ENCODE measurements at regions of chr10 and their contacts with region 1.

Region 1: DNA sequence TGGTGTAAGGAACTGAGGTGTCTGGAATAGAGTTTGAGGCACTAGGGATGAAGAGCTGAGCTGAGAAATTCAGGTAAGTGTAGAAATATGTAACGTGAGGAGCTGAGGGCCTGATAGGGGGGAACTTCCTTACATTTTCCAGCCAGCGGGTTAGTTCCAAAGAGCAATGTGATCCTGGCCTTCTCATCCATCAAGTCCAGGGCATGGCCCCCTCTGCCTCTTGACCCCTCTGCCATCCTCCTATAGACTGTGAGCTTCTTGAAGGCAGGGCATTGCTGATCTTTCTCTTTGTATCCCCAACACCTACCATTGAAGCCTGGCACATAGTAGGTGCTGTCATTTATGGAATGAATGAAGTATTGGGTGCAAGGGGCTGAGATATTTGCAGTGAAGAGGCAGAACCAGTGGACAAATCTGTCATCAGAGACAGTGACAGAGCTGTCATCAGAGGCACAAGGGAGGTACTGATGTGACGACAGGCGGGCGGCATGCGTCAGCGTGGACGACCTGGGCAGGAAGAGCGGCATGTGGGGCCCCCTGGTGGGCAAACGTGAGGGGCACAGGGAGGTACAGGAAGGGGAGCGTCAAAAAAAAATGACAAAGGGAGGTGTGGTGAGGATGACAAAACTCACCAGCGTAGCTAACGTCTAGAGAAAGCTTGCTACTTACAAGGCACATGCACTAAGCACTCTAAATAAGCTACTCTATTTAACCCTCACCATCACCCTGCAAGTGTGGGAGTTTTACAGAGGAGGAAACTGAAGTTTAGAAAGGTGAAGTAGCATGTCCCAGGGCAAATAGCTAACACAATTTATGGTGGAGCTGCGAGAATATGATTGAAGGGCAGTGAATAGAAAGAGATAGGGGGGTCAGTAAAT is 5.2 kb upstream of the CAMK2G start:
- DNase-seq: peak; percentile 97
- H3K4me3 Mint-ChIP-seq: peak overlapping the region; percentile 6
- H3K27ac Mint-ChIP-seq: no peak overlapping the region
- H3K4me1 Mint-ChIP-seq: peaks cover 27% of the 10 kb centered on the region
- H3K27me3 Mint-ChIP-seq: no peaks in the 10 kb centered on the region

Region 2: DNA sequence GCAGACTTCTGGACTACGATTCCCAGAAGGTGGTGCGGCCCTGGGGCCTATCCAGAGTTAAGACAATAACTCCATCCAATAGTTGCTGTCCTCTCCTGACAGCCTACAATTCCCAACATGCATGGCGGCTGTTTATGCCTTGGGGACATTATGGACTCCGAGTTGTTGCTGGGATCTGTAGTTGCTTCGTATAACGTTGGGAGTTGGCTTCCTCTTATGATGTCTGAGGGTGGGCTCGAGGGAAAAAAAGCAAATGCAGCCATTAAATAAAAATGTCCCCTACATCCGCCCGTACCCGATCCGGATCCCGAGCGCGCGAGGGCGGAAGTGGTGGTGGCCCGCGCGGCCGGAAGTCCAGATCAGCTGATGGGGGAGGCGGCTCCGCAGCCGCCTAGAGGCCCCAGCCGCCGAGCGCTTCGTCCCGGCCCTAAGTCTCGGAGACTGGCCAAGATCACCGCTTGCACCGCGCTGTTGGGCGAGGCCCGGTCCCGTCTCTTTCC is 94.3 kb before region 1 on chr10 and contains the start of gene ZSWIM8:
- CTCF ChIA-PET with region 1: interaction called, 4 read pairs
- POLR2A ChIA-PET with region 1: no interaction called
- intact Hi-C with region 1: loop called (anchors 5 kb)
- DNase-seq: peak; percentile 90
- H3K4me3 Mint-ChIP-seq: peak within 1 kb of the TSS; percentile 98
- H3K27ac Mint-ChIP-seq: peak within 1 kb of the TSS; percentile 96
- H3K4me1 Mint-ChIP-seq: peaks cover 40% of the 10 kb centered on the region
- H3K27me3 Mint-ChIP-seq: no peaks in the 10 kb centered on the region
- total RNA-seq, gene ZSWIM8: 45.1 to 46.2 TPM

Region 3: GRCh38 chr10:73841526-73842285 is 37.8 kb before region 1 on chr10:
- CTCF ChIA-PET with region 1: interaction called, 486 read pairs
- POLR2A ChIA-PET with region 1: no interaction called
- intact Hi-C with region 1: no loop called
- DNase-seq: no peak
- H3K4me3 Mint-ChIP-seq: no peak overlapping the region
- H3K27ac Mint-ChIP-seq: no peak overlapping the region
- H3K4me1 Mint-ChIP-seq: no peaks in the 10 kb centered on the region
- H3K27me3 Mint-ChIP-seq: no peaks in the 10 kb centered on the region

Region 4: GRCh38 chr10:73857446-73857845 is 22.1 kb before region 1 on chr10:
- CTCF ChIA-PET with region 1: interaction called, 486 read pairs
- POLR2A ChIA-PET with region 1: interaction called, 7 read pairs
- intact Hi-C with region 1: loop called (anchors 1 kb)
- DNase-seq: peak; percentile 80
- H3K4me3 Mint-ChIP-seq: peak overlapping the region; percentile 44
- H3K27ac Mint-ChIP-seq: peak overlapping the region; percentile 84
- H3K4me1 Mint-ChIP-seq: peaks cover 56% of the 10 kb centered on the region
- H3K27me3 Mint-ChIP-seq: no peaks in the 10 kb centered on the region

Region 5: DNA sequence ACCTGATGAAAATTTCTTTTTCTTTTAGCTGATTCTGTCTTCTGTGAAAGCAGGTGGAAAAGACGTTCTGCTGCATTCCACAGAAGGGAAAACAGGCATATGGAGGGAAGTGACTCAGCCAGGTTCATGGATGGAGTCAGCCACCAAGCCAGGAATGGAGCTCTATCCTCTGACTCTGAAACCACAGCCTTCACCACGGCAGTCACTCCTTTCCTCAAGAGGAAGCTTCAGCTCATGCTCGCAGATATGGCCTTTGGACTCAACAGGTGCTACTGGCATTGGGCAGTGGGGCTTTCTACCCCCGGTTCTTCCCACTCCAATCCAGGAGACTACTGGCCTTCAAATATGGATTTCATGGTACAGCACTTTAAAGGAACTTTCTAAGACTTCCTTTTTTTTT is 19.9 kb after region 1 on chr10:
- CTCF ChIA-PET with region 1: interaction called, 11 read pairs
- POLR2A ChIA-PET with region 1: no interaction called
- intact Hi-C with region 1: no loop called
- DNase-seq: no peak
- H3K4me3 Mint-ChIP-seq: no peak overlapping the region
- H3K27ac Mint-ChIP-seq: no peak overlapping the region
- H3K4me1 Mint-ChIP-seq: peaks cover 7% of the 10 kb centered on the region
- H3K27me3 Mint-ChIP-seq: no peaks in the 10 kb centered on the region

Region 6: GRCh38 chr10:74081192-74081803 is 201.8 kb after region 1 on chr10:
- CTCF ChIA-PET with region 1: interaction called, 17 read pairs
- POLR2A ChIA-PET with region 1: no interaction called
- intact Hi-C with region 1: no loop called
- DNase-seq: peak; percentile 58
- H3K4me3 Mint-ChIP-seq: no peak overlapping the region
- H3K27ac Mint-ChIP-seq: no peak overlapping the region
- H3K4me1 Mint-ChIP-seq: peaks cover 45% of the 10 kb centered on the region
- H3K27me3 Mint-ChIP-seq: no peaks in the 10 kb centered on the region